ENCODE measurements at regions of chr11 and their contacts with region 1.

Region 1: DNA sequence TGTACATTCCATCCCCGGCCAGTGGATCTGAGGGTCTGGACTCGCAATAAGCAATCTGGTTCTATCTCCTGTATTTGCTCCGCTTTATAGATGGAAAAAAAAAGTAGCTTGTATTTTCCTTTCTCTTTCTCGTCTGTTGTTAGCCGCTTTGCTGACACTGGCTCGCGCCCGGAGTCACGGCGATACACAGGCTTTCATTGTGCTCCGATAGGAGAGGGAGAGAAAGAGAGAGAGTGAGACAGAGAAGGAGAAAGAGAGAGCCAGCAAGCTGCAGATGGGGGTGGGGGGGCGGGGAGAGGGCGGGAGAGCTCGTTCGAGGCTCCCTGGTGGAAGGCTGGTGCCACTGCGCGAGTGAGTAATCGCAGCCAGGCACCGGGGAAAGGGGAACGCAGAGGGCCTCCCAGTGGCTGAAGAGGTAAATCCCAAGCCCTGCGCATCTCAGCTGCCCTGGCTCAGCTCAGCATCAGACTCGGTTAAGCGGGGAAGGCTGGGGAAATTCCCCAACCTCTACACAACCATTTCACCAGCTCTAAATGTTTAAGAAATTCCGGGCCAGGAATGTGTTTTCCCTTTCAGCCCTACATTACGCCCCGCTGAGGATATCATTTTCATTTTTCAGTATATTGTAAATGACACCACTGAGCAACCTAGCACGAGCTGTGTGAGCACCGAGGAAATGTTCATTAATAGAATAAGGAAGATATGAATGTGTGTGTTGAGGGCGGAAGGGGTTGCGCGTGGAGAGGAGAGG is at the start of gene MAML2:
- DNase-seq: peak; percentile 74 to 94 (median 89)
- ATAC-seq: peak; percentile 78 to 83
- H3K4me3 Mint-ChIP-seq: peak within 1 kb of the TSS; percentile 91 to 99 (median 96)
- H3K27ac Mint-ChIP-seq: peak within 1 kb of the TSS; percentile 94 to 99 (median 97)
- H3K4me1 Mint-ChIP-seq: peaks cover 19 to 50% (median 31%) of the 10 kb centered on the region in 4 donors
- H3K27me3 Mint-ChIP-seq: no peaks in the 10 kb centered on the region
- polyA plus RNA-seq, gene MAML2: 6.6 to 33.0 (median 15.3) TPM

Region 2: GRCh38 chr11:96012086-96012824 is 330.9 kb before region 1 on chr11:
- POLR2A ChIA-PET with region 1: interaction called, 24 read pairs
- DNase-seq: peak in 9 of 10 donors; percentile 37 to 82 (median 65)
- ATAC-seq: peak; percentile 74
- H3K4me3 Mint-ChIP-seq: peak overlapping the region; percentile 32 to 81 (median 72)
- H3K27ac Mint-ChIP-seq: peak overlapping the region in 9 of 10 donors; percentile 93 to 99 (median 96)
- H3K4me1 Mint-ChIP-seq: peaks cover 23 to 69% (median 61%) of the 10 kb centered on the region in 4 donors
- H3K27me3 Mint-ChIP-seq: no peaks in the 10 kb centered on the region

Region 3: DNA sequence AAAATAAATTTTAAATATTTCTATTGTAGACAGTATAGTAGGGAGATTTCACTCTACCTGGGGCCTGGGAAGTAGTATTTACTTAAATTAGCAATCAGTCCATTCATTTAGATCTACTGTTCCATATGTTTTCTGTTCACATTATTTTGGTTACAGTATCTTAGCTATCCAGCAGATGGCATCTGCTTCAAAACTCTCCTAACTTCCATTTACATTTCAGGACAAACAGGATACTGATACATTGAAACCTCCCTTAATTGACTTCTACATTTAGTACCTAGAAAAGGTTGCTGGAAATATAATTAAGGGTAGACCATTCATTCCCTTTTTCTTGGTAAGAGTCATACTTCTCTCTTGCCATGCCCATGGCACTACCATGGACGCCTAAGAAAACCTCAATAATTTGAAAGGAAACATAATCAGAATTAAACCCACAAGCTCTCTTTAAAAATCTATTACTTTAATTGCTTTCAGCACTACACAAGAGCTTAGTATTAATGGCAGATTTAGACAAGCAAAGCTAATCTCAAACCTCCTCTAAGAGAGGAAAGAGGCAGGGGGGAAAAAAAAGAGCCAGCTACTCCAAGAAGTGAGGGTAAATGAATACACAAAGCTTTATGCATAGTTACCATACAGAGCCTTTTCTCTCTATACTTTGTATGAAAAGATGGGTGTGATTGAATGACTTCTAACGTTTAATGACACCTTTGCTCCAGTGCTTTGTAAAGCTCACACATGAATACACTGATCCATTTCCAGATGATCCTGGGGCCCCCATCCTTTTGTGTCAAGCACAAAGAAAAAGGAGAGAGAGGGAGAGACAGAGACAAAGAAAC is 288.0 kb before region 1 on chr11:
- POLR2A ChIA-PET with region 1: interaction called, 22 read pairs
- DNase-seq: peak in 3 of 10 donors; percentile 34 to 38 (median 35)
- ATAC-seq: peak; percentile 52 to 72
- H3K4me3 Mint-ChIP-seq: peak overlapping the region in 2 of 10 donors; percentile 11 to 19
- H3K27ac Mint-ChIP-seq: peak overlapping the region in 9 of 10 donors; percentile 10 to 81 (median 55)
- H3K4me1 Mint-ChIP-seq: peaks cover 30 to 77% (median 61%) of the 10 kb centered on the region in 4 donors
- H3K27me3 Mint-ChIP-seq: no peaks in the 10 kb centered on the region

Region 4: DNA sequence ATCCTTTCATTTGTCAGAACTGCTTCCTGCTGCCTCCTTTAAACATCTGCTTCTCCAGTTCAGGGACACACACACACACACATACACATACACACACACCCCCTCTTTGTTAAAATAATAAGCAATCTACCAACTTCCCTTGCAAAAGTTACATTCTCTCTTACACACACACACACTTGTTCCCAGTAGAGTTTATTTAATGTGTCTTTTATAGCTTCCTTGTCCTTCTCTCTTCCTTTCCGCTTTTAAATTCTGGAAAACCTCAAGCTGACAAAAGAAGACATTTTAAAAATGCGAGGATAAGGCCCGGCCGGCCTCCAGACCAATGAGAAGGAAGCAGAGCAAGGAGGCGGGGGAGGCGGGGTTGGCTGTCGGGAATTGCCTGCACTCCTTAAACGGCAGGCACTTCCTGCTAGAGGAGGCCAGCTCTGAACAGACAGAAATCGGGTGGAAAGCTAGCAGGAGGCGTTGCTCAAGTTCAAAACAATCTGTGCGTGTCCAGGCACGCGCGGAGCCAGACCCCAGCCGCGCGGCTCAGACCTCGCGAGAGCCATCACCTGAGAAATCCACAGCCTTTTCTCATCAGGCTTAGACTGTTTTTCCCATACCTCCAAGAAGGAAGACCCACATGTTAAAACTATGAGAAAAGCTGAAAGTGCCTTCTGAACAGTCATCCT is 100.0 kb before region 1 on chr11:
- POLR2A ChIA-PET with region 1: interaction called, 26 read pairs
- DNase-seq: peak; percentile 54 to 81 (median 66)
- ATAC-seq: peak; percentile 73 to 85
- H3K4me3 Mint-ChIP-seq: peak overlapping the region; percentile 81 to 91 (median 84)
- H3K27ac Mint-ChIP-seq: peak overlapping the region; percentile 80 to 100 (median 93)
- H3K4me1 Mint-ChIP-seq: peaks cover 34 to 65% (median 62%) of the 10 kb centered on the region in 4 donors
- H3K27me3 Mint-ChIP-seq: no peaks in the 10 kb centered on the region

Region 5: DNA sequence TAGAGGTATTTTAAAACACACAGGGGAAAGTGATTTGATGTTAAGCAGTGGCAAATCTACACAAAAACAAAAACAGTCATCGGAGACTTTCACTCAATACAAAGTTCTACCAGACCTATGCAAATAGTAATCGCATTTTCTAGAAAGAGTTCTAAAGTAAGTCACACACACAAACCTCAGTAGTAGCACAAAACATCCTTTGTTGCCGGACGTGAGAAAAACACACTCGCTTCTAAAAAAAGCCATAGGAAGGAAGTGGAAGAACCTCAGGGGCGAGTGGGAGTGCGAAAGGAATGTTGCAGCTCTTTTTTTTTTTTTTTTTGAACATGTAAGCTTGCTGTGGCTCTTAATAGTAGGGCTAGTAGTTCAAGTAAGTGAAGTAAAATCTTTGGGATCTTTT is 89.0 kb before region 1 on chr11:
- POLR2A ChIA-PET with region 1: interaction called, 28 read pairs
- DNase-seq: peak in 5 of 10 donors; percentile 16 to 54 (median 35)
- ATAC-seq: peak in 1 of 2 donors; percentile 17
- H3K4me3 Mint-ChIP-seq: peak overlapping the region; percentile 34 to 85 (median 80)
- H3K27ac Mint-ChIP-seq: peak overlapping the region; percentile 83 to 100 (median 98)
- H3K4me1 Mint-ChIP-seq: peaks cover 51 to 95% (median 92%) of the 10 kb centered on the region in 4 donors
- H3K27me3 Mint-ChIP-seq: no peaks in the 10 kb centered on the region

Measured in naive thymus-derived CD8-positive, alpha-beta T cell (primary cell).